Breast epithelium (tissue), 4 donors: ENCODE measurements at regions of chr7 and their contacts with region 1.

Region 1: DNA sequence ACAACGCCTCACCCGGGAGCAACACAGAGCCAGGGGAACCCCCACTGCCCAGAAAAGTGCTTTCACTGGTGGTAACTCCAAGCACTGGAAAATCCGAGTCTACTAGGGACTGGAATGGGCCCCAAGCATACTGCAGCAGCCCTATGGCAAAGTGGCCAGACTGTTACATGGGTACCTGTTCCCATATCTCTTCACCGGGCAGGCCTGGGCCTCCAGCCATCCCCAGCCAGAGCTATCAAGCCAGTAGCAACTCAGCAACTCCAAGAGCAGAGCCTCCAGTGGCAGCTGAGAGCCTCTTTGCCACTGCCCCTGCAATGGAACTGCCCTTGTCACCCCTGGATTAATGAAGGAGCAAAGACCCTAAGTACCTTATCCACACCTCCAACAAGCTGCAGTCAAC is 73.5 kb downstream of the HBP1 start:
- DNase-seq: no peak
- H3K4me3 ChIP-seq: no peak overlapping the region
- H3K27ac ChIP-seq: no peak overlapping the region
- H3K4me1 ChIP-seq: no peaks in the 10 kb centered on the region
- H3K27me3 ChIP-seq: no peaks in the 10 kb centered on the region
- CTCF ChIP-seq: no peak
- POLR2A ChIP-seq: no peak

Region 2: GRCh38 chr7:107201795-107202450 is 40.3 kb before region 1 on chr7:
- intact Hi-C with region 1: loop called (anchors 2 kb)
- DNase-seq: no peak
- H3K4me3 ChIP-seq: no peak overlapping the region
- H3K27ac ChIP-seq: no peak overlapping the region
- H3K4me1 ChIP-seq: no peaks in the 10 kb centered on the region
- H3K27me3 ChIP-seq: no peaks in the 10 kb centered on the region
- CTCF ChIP-seq: peak in 2 of 3 donors; percentile 51 to 53
- POLR2A ChIP-seq: no peak

Region 3: DNA sequence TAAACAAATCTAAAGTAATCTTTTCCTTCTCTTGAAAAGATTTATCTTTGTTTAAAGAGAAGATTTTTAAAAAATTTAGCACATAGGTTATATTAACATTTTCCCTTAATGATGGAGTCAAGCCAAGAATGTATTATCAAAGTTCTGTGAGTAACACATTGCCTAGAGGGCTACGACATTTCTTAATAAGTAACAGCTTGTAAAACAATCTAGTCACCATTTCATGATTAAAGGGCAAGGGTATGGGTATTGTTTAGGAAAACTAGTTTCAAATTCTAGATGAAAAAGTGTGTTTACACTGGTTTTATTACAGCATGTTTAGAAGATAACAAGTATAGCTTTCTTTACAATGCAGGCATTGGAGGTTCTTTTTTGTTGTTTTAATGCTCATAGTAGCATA is 916.5 kb after region 1 on chr7:
- intact Hi-C with region 1: no loop called
- DNase-seq: no peak
- H3K4me3 ChIP-seq: no peak overlapping the region
- H3K27ac ChIP-seq: no peak overlapping the region
- H3K4me1 ChIP-seq: no peaks in the 10 kb centered on the region
- H3K27me3 ChIP-seq: no peaks in the 10 kb centered on the region
- CTCF ChIP-seq: no peak
- POLR2A ChIP-seq: no peak